Panc1 (cell line): ENCODE measurements at regions of chr10 and their contacts with region 1.

Region 1: DNA sequence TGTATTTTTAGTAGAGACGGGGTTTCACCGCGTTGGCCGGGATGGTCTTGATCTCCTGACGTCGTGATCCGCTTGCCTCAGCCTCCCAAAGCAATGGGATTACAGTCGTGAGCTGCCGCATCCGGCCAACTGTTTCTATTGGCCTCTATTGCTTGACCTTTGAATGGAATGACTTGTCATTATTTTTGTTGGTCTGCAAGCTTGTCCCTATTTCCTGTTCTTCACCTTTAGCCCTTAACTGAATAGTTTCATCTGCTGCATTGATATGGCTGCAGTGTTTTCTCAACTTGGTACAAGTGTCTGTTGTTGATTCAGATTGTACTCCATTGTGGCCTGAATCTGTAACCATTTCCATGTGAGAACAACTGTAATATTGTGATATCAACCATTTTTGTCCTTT is 105.5 kb downstream of the POLL start:
- DNase-seq: no peak
- ATAC-seq: no peak
- H3K4me3 ChIP-seq: no peak overlapping the region
- H3K27ac ChIP-seq: no peak overlapping the region
- H3K4me1 ChIP-seq: no peaks in the 10 kb centered on the region
- H3K27me3 ChIP-seq: no peaks in the 10 kb centered on the region
- CTCF ChIP-seq: no peak

Region 2: DNA sequence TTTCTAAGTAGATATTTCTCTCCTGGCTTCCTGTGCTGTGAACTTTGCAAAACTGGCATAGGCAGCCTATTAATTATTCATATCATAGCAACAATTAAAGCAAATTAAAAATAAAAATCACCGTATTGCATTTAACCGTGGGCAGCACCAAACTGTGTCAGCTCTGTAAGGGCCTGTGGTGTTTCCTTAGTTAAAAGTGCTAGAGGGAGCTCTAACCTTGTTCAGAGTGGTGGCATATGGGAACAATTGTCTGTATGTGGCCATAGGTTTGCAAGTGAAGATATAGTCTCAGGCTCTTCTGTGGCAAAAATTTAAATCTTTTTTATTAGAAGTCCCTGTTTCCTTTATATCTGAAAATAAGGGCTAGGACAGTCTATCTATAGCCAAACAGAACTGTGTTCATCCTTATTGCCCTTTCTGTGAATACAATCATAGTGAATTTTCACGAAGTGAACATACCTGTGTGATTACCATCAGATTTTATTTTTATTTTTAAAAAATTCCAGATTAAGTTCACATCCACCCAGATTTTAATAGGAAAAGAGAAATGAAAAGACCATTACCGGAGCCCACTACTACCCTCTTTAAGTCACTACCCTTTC is 12.9 kb after region 1 on chr10:
- CTCF ChIA-PET with region 1: no interaction called
- POLR2A ChIA-PET with region 1: interaction called, 15 read pairs
- in situ Hi-C with region 1: no loop called
- intact Hi-C with region 1: no loop called
- DNase-seq: peak; percentile 12
- ATAC-seq: peak; percentile 99
- H3K4me3 ChIP-seq: no peak overlapping the region
- H3K27ac ChIP-seq: no peak overlapping the region
- H3K4me1 ChIP-seq: no peaks in the 10 kb centered on the region
- H3K27me3 ChIP-seq: no peaks in the 10 kb centered on the region
- CTCF ChIP-seq: peak; percentile 81